ENCODE measurements at regions of chr9 and their contacts with region 1.

Region 1: DNA sequence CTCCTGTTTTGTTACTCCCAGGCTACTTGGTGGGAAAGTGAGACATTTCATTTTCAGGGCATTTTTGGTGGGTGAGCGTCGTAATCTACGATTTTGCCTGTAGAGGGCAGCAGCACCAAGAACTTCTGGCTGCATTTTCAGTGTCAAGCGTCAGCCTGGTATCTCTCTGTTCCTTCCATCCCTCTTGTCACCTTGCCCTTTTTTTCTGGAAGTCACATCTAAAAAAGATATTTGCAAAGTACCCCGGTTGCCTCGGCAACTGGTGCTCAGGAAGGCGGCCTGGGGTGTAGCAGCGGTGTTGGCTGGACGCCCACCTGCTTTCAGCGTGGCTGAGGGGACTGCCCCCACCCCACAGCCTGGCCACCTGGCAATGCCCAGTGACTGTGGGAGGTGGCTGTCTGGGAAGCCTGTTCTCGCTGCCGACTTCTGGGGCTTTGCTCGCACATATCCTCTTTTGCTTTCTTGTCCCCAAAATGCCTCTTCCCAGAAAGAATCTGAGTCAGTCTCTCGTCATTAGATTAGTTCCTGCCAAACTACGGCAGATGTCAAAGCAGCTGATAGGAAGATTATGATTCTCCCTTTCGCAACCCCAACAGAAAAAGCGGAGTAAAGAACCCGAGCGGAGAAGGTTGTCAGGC is 84.5 kb downstream of the ACER2 start:
- DNase-seq: peak; percentile 31 to 78
- H3K4me3 ChIP-seq: no peak overlapping the region
- H3K27ac ChIP-seq: no peak overlapping the region
- H3K4me1 ChIP-seq: no peaks in the 10 kb centered on the region
- H3K27me3 ChIP-seq: no peaks in the 10 kb centered on the region
- CTCF ChIP-seq: peak; percentile 54 to 85 (median 80)
- EP300 ChIP-seq: no peak
- POLR2A ChIP-seq: no peak
- RAD21 ChIP-seq: peak; percentile 89 to 90

Region 2: DNA sequence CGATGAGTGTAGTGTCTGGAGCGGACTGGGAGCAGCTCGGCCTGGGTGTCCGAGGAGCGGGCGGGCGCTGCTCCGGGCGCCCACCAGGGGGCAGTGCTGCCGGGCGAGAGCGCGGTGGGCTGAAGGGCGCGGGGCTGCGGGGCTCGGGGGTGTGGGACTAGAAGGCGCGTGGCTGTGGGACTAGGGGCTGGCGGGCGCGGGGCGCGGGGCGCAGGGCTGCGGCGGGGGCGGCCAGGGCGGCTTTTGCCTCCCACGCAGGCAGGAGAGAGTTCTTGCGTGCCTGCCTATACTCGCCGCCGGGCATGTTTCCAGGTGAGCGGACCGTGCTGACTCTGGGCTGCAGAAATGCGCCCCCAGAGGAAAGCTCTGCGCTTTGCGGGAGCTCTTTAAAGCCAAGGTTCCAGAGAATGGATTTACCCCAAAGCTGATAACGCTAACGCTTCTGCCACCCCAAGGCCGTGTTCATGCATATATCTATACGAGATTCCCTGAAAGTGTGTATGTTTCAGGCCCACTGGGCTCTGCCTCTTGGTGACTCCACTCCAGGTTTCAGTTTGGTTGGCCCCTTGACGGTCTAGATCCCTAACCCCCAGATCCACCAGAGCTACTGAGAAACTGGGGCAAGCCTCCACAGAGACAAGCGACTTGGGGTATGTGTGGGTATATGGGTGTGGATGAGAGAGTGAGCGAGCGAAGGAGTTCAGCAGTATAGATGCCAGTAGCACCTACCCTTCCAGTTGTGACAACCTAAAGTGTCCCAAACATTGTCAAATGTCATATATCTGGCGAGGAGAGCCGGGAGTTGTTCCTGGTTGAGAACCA is 28.3 kb before region 1 on chr9:
- CTCF ChIA-PET with region 1: interaction called, 26 read pairs
- POLR2A ChIA-PET with region 1: no interaction called
- DNase-seq: peak; percentile 51 to 93
- H3K4me3 ChIP-seq: peak overlapping the region; percentile 44 to 73 (median 46)
- H3K27ac ChIP-seq: no peak overlapping the region
- H3K4me1 ChIP-seq: no peaks in the 10 kb centered on the region
- H3K27me3 ChIP-seq: peaks cover 0 to 2% (median 0%) of the 10 kb centered on the region in 4 experiments; a peak in 2 of 7 replicates
- CTCF ChIP-seq: peak; percentile 67 to 90 (median 87)
- EP300 ChIP-seq: no peak
- POLR2A ChIP-seq: peak in 1 of 2 experiments; percentile 54; a peak in 1 of 3 replicates
- RAD21 ChIP-seq: peak; percentile 29 to 52; a peak in 2 of 4 replicates

Region 3: GRCh38 chr9:19471737-19472648 is 21.3 kb before region 1 on chr9:
- CTCF ChIA-PET with region 1: interaction called, 26 read pairs
- POLR2A ChIA-PET with region 1: no interaction called
- DNase-seq: peak; percentile 39 to 88
- H3K4me3 ChIP-seq: no peak overlapping the region; a peak in 1 of 8 replicates
- H3K27ac ChIP-seq: no peak overlapping the region
- H3K4me1 ChIP-seq: peaks cover 0 to 7% (median 0%) of the 10 kb centered on the region in 4 experiments; a peak in 1 of 7 replicates
- H3K27me3 ChIP-seq: no peaks in the 10 kb centered on the region
- CTCF ChIP-seq: peak; percentile 87 to 94 (median 89)
- EP300 ChIP-seq: no peak
- POLR2A ChIP-seq: no peak
- RAD21 ChIP-seq: peak; percentile 88 to 94

Region 4: DNA sequence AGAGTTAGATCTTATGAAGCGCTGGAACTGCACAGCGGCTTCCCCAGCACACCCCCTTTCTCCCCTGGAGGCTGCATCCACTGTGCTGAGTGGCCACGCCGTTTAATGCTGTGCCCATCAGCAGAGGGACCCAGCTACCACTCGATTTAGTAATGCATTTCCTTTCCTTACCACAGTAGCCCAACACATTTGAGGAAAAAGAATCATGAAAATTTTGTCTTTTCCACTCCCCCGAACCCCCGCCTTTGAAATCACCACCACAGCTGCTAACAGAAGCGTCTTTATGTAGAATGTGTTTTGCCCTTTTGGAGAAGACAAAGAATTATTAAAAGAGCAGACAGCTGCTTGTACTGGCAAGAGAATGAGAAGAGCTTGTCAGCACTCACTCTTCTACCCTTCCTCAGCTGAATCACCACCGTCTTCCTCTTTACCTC is 11.3 kb before region 1 on chr9:
- CTCF ChIA-PET with region 1: interaction called, 11 read pairs
- POLR2A ChIA-PET with region 1: no interaction called
- DNase-seq: no peak
- H3K4me3 ChIP-seq: no peak overlapping the region
- H3K27ac ChIP-seq: no peak overlapping the region
- H3K4me1 ChIP-seq: no peaks in the 10 kb centered on the region
- H3K27me3 ChIP-seq: no peaks in the 10 kb centered on the region
- CTCF ChIP-seq: 0 out of 4 replicates have a peak, but pooled peaks of 1 of the 3 experiments have one; percentile 6
- EP300 ChIP-seq: no peak
- POLR2A ChIP-seq: no peak
- RAD21 ChIP-seq: peak in 1 of 2 experiments; percentile 10; a peak in 1 of 4 replicates

Region 5: GRCh38 chr9:19510907-19511306 is 17.6 kb after region 1 on chr9:
- CTCF ChIA-PET with region 1: interaction called, 16 read pairs
- POLR2A ChIA-PET with region 1: no interaction called
- DNase-seq: no peak
- H3K4me3 ChIP-seq: no peak overlapping the region
- H3K27ac ChIP-seq: no peak overlapping the region
- H3K4me1 ChIP-seq: no peaks in the 10 kb centered on the region; a peak in 1 of 7 replicates
- H3K27me3 ChIP-seq: peaks cover 0 to 1% (median 0%) of the 10 kb centered on the region in 4 experiments; a peak in 1 of 7 replicates
- CTCF ChIP-seq: no peak
- EP300 ChIP-seq: no peak
- POLR2A ChIP-seq: no peak
- RAD21 ChIP-seq: no peak

Region 6: DNA sequence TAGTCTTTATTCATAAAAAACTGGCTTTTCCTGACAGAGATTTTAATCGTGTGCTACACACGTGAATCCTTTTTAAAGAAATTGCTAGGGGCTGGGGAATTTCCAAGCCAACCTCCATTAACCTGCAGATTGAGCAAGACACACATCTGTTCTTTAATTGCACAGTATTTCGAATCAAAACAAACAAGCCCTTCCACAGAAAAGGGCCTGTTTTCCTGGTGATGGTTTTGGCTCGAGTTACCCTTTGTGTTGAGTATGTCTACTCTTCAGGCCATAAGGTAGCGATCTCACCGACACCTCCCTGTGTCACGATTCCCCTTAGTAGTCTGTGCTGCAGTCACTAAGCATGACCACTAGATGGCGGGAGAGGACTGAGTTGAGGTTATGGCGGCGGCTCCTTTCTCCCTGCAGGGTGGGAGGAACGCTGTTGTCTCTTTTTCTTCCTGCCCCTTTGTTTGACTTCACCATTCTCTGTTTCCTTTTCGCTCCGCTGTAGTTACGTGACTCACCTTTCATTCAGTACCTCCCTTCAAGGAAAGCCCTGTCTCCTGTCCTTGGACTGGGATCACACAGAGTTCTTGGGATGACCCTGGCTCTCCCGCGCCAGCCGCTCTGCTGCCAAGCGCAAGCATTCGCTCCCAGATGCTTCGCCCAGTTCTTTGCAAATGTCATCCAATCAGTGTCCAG is 432.7 kb after region 1 on chr9:
- CTCF ChIA-PET with region 1: interaction called, 12 read pairs
- POLR2A ChIA-PET with region 1: no interaction called
- DNase-seq: peak; percentile 70 to 89
- H3K4me3 ChIP-seq: peak overlapping the region in 3 of 4 experiments; percentile 11 to 47 (median 17); a peak in 4 of 8 replicates
- H3K27ac ChIP-seq: no peak overlapping the region
- H3K4me1 ChIP-seq: peaks cover 0 to 8% (median 4%) of the 10 kb centered on the region in 4 experiments; a peak in 3 of 7 replicates
- H3K27me3 ChIP-seq: peaks cover 0 to 4% (median under 1%) of the 10 kb centered on the region in 4 experiments; a peak in 2 of 7 replicates
- CTCF ChIP-seq: peak; percentile 92 to 99 (median 92)
- EP300 ChIP-seq: no peak
- POLR2A ChIP-seq: no peak
- RAD21 ChIP-seq: peak; percentile 99

Measured in H1 (cell line).